GM10248 (cell line): ENCODE measurements at regions of chr21 and their contacts with region 1.

Region 1: GRCh38 chr21:34185026-34185750 is 111.8 kb downstream of the MRPS6 start:
- DNase-seq: no peak
- CTCF ChIP-seq: no peak

Region 2: GRCh38 chr21:34029743-34030528 is 155.3 kb before region 1 on chr21:
- CTCF ChIA-PET with region 1: no interaction called
- POLR2A ChIA-PET with region 1: no interaction called
- DNase-seq: peak; percentile 70
- CTCF ChIP-seq: no peak

Region 3: GRCh38 chr21:34202553-34203372 is 17.6 kb after region 1 on chr21:
- CTCF ChIA-PET with region 1: interaction called, 10 read pairs
- POLR2A ChIA-PET with region 1: no interaction called
- DNase-seq: no peak
- CTCF ChIP-seq: no peak

Region 4: GRCh38 chr21:34243562-34243961 is 58.4 kb after region 1 on chr21:
- CTCF ChIA-PET with region 1: no interaction called
- POLR2A ChIA-PET with region 1: no interaction called
- DNase-seq: no peak
- CTCF ChIP-seq: peak; percentile 34